Activated B cell treated with CpG ODN at 0.5 μM for 24 hours (primary cell): ENCODE measurements at regions of chr2 and their contacts with region 1.

Region 1: GRCh38 chr2:201808027-201808426 is 1.7 kb downstream of the CDK15 start:
- DNase-seq: no peak
- ATAC-seq: no peak
- H3K4me3 Mint-ChIP-seq: no peak overlapping the region
- H3K27ac Mint-ChIP-seq: no peak overlapping the region
- H3K4me1 Mint-ChIP-seq: no peaks in the 10 kb centered on the region
- H3K27me3 Mint-ChIP-seq: peaks cover 15% of the 10 kb centered on the region
- CTCF ChIP-seq: no peak

Region 2: DNA sequence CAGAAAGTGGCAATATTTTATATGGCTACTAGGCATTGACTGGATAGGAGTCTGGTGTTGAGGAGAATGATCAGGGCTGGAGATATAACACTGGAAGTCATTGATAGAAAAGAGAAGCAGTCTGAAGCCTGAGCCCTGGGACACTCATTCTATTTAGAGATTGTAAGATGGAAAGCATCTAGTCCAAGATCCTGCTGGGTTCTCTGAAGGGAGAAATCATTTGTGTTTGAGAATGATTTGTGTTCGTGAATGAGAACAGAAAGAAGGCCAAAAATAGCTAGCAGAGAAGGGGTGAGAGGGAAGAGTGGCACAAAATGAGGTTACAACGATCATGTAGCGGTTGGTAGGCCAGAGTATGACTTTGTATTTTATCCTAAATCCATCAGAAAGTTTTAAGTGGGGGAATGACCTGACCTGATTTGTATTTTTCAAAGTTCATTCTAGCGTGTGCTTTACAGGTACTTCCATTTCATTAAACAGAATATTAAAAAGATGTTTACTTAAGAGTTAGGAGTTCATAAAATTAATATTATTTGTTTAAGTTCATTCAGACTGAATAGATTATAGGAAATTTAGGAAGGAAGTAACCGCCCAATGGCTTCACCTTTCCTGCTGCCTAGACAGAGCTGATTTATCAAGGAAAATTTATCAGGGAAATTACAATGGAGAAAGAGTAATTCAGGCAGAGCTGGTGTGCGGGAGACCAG is 19.5 kb before region 1 on chr2:
- CTCF ChIA-PET with region 1: no interaction called
- POLR2A ChIA-PET with region 1: no interaction called
- intact Hi-C with region 1: loop called (anchors 2 kb)
- DNase-seq: no peak
- ATAC-seq: no peak
- H3K4me3 Mint-ChIP-seq: no peak overlapping the region
- H3K27ac Mint-ChIP-seq: no peak overlapping the region
- H3K4me1 Mint-ChIP-seq: no peaks in the 10 kb centered on the region
- H3K27me3 Mint-ChIP-seq: peaks cover 28% of the 10 kb centered on the region
- CTCF ChIP-seq: no peak

Region 3: DNA sequence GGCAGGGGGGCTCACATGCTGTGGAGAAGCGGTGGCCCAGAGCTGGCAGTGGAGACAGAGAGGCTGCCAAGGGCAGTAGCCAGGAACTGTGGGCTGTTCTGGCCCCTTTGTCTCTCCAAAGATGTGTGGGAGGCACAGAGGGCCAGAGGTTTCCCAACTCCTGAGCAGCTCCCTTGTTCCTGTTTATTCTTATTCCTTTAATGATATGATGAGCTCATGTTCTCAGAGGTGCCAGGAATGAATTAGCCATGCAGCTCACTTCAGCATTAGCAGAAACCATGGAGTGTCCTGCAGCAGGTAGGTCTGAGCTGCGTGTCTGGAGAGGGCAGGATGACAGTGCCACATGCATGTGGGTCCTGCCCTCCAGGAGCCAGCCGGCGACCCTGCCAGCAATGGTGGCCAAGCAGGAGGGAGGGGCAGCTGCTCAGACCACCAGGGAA is 147.7 kb after region 1 on chr2:
- CTCF ChIA-PET with region 1: no interaction called
- POLR2A ChIA-PET with region 1: no interaction called
- intact Hi-C with region 1: no loop called
- DNase-seq: no peak
- ATAC-seq: no peak
- H3K4me3 Mint-ChIP-seq: no peak overlapping the region
- H3K27ac Mint-ChIP-seq: no peak overlapping the region
- H3K4me1 Mint-ChIP-seq: peaks cover 2% of the 10 kb centered on the region
- H3K27me3 Mint-ChIP-seq: peaks cover 11% of the 10 kb centered on the region
- CTCF ChIP-seq: no peak